Lower leg skin (tissue), 4 donors: ENCODE measurements at regions of chr11 and their contacts with region 1.

Region 1: DNA sequence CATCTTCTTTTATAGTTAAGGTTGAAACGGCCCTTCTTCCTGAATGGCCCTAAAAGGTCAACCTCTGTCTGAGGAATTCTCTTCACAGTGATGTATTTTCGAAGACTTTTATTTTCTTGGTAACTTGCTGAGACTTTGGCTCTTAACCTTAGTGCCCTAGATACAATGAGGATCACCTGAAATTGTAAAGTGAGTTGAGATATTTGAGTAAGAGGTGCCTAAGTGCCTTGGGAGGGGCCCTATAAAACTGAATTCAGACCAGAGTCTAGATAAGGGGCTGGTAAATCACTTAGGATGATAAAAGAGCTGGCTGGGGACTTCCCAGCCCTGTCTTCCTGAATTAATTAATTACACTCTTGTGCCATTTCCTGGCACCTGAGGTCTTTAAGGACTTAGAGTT is 505.6 kb upstream of the KIRREL3 start:
- DNase-seq: no peak
- H3K4me3 ChIP-seq: no peak overlapping the region
- CTCF ChIP-seq: no peak
- POLR2A ChIP-seq: no peak

Region 2: GRCh38 chr11:125583496-125583895 is 1922.6 kb before region 1 on chr11:
- intact Hi-C with region 1: no loop called
- DNase-seq: no peak
- H3K4me3 ChIP-seq: no peak overlapping the region
- CTCF ChIP-seq: no peak
- POLR2A ChIP-seq: no peak

Region 3: GRCh38 chr11:127461241-127462064 is 44.7 kb before region 1 on chr11:
- intact Hi-C with region 1: no loop called
- DNase-seq: no peak
- H3K4me3 ChIP-seq: no peak overlapping the region
- CTCF ChIP-seq: no peak
- POLR2A ChIP-seq: no peak

Region 4: GRCh38 chr11:127890030-127890611 is 384.0 kb after region 1 on chr11:
- intact Hi-C with region 1: loop called (anchors 5 kb)
- DNase-seq: no peak
- H3K4me3 ChIP-seq: no peak overlapping the region
- CTCF ChIP-seq: no peak
- POLR2A ChIP-seq: no peak